ENCODE measurements at regions of chr6 and their contacts with region 1.

Region 1: DNA sequence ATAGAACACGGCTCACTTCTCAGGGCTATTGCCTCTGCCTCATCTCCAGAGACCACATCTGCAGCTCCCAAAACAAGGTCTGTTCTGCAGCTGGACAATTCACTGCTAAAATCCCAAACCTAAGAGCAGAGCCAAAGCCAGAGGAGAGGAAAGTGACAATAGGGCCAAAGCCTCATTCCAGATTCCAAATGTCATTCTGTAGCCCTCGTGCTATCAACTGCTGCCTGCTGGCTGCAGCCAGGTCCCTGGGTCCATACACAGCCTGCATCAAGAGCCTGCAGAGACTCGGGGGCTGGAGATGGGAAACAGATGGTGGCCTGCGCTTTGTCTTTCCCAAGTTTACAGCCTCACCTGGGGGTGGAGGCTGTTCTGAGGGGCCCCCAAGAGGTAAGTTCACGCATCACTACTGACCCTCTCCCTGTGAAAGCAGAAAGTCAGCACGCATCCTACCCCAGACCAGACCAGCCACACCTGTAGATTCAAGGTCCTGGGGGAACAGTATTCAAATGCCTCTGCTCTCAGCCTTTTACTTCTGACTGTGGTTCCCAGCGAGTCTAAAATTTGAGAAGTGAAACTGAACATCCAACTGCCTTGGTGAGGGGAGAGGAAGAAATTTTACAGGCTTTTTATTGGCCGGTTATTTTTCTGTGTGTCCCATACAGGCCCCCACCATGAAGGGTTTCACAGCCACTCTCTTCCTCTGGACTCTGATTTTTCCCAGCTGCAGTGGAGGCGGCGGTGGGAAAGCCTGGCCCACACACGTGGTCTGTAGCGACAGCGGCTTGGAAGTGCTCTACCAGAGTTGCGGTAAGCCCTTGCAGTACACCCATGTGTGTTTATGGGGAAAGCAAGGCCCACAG is at the start of gene LY86:
- DNase-seq: peak; percentile 56
- ATAC-seq: peak; percentile 65
- H3K4me3 Mint-ChIP-seq: peak within 1 kb of the TSS; percentile 96
- H3K27ac Mint-ChIP-seq: peak within 1 kb of the TSS; percentile 98
- H3K4me1 Mint-ChIP-seq: peaks cover 95% of the 10 kb centered on the region
- H3K27me3 Mint-ChIP-seq: no peaks in the 10 kb centered on the region
- CTCF ChIP-seq: no peak
- total RNA-seq, gene LY86: 57.6 and 58.1 TPM in 2 replicates

Region 2: GRCh38 chr6:6390849-6391602 is 197.3 kb before region 1 on chr6:
- CTCF ChIA-PET with region 1: no interaction called
- POLR2A ChIA-PET with region 1: interaction called, 5 read pairs
- intact Hi-C with region 1: loop called (anchors 1 kb)
- DNase-seq: peak; percentile 42
- ATAC-seq: peak; percentile 78
- H3K4me3 Mint-ChIP-seq: peak overlapping the region; percentile 77
- H3K27ac Mint-ChIP-seq: peak overlapping the region; percentile 96
- H3K4me1 Mint-ChIP-seq: peaks cover 63% of the 10 kb centered on the region
- H3K27me3 Mint-ChIP-seq: peaks cover 2% of the 10 kb centered on the region
- CTCF ChIP-seq: no peak

Region 3: GRCh38 chr6:6569481-6570167 is 18.7 kb before region 1 on chr6:
- CTCF ChIA-PET with region 1: interaction called, 3 read pairs
- POLR2A ChIA-PET with region 1: no interaction called
- intact Hi-C with region 1: loop called (anchors 2 kb)
- DNase-seq: no peak
- ATAC-seq: no peak
- H3K4me3 Mint-ChIP-seq: no peak overlapping the region
- H3K27ac Mint-ChIP-seq: no peak overlapping the region
- H3K4me1 Mint-ChIP-seq: peaks cover under 1% of the 10 kb centered on the region
- H3K27me3 Mint-ChIP-seq: no peaks in the 10 kb centered on the region
- CTCF ChIP-seq: no peak

Region 4: GRCh38 chr6:6616656-6617055 is 28.4 kb after region 1 on chr6:
- CTCF ChIA-PET with region 1: interaction called, 10 read pairs
- POLR2A ChIA-PET with region 1: interaction called, 100 read pairs
- intact Hi-C with region 1: loop called (anchors 5 kb)
- DNase-seq: no peak
- ATAC-seq: peak; percentile 68
- H3K4me3 Mint-ChIP-seq: peak overlapping the region; percentile 51
- H3K27ac Mint-ChIP-seq: peak overlapping the region; percentile 80
- H3K4me1 Mint-ChIP-seq: peaks cover 85% of the 10 kb centered on the region
- H3K27me3 Mint-ChIP-seq: no peaks in the 10 kb centered on the region
- CTCF ChIP-seq: no peak

Region 5: DNA sequence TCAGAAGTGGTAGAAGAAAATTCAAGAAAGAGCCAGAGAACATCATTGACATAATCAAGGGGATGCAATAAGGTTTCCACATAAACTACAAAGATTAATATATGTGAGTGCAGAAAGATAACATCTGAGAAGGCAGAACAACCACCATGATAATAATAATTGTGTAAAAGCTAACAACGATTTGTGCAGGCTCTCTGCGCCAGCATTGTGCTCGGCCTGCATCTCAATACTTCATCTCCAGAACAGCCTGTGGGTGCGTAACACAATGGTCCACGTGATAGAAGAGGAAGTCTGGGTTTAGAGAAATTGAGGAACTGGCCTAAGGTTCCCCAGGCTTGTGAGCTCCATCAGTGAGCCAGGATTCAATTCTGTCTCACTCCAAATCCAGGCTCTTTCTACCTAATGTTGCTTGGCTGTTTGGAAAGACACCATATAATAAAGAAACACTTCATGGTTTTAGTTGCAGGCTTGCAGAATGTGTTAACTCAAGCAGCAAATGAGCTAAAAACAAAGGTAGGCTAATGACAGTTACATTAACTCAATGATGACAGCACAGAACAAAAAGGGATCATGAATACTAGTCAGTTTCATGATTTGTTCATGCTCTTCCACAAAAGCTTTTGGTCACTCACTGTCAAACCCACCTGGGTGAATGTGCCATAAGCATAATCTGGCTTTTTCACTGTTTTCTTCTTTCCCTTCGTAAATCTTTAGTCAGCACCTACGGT is 71.5 kb after region 1 on chr6:
- CTCF ChIA-PET with region 1: interaction called, 8 read pairs
- POLR2A ChIA-PET with region 1: interaction called, 52 read pairs
- intact Hi-C with region 1: loop called (anchors 1 kb)
- DNase-seq: no peak
- ATAC-seq: peak; percentile 95
- H3K4me3 Mint-ChIP-seq: peak overlapping the region; percentile 47
- H3K27ac Mint-ChIP-seq: peak overlapping the region; percentile 93
- H3K4me1 Mint-ChIP-seq: peaks cover 39% of the 10 kb centered on the region
- H3K27me3 Mint-ChIP-seq: no peaks in the 10 kb centered on the region
- CTCF ChIP-seq: no peak

Region 6: DNA sequence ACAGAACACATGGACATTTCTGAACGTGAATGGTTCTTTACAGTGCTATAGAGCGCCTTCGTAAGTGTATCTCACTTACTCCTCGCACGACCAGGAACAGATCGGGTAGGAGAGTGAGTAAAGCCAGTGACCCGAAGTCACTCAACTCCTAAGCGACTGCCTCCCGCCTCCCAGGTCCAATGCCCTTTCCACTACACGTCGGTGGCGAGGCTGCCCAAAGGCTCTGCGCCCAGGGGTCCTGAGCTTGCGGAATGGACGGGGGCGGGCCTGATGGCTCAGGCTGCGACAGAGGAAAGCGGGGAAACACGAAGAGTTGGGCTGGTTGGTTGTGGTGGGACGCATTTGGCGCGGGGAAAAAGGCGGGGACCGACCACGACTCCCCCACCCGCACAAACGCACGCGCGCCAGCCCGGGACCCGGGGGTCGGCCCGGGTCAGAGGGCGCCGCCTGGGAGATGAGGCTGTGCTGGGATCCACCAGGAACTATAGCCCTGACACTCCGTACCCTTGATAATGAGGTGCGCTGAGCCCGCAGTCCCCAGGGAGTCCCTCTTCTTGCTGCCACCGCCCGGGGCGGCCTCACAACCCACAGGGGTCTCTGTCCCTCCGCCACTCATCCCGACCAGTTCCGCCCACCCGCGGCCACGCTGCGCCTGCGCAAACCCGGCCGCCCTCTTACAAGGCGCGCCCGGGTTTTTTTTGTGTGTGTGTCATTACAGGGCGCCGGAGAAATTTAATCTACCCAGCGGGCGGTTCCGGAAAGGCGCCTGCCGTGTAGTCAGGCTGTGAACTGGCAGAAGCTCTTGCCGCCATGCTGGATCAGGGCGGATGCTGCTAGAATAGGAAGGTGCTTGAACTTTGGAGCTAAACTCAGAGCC is 1475.7 kb after region 1 on chr6 and contains the start of gene BLOC1S5:
- CTCF ChIA-PET with region 1: no interaction called
- POLR2A ChIA-PET with region 1: no interaction called
- intact Hi-C with region 1: loop called (anchors 2 kb)
- DNase-seq: peak; percentile 96
- ATAC-seq: peak; percentile 90
- H3K4me3 Mint-ChIP-seq: peak within 1 kb of the TSS; percentile 93
- H3K27ac Mint-ChIP-seq: peak within 1 kb of the TSS; percentile 91
- H3K4me1 Mint-ChIP-seq: peaks cover 25% of the 10 kb centered on the region
- H3K27me3 Mint-ChIP-seq: no peaks in the 10 kb centered on the region
- CTCF ChIP-seq: no peak
- total RNA-seq, gene BLOC1S5: 13.8 and 16.8 TPM in 2 replicates